SK-N-SH (cell line): ENCODE measurements at regions of chr3 and their contacts with region 1.

Region 1: DNA sequence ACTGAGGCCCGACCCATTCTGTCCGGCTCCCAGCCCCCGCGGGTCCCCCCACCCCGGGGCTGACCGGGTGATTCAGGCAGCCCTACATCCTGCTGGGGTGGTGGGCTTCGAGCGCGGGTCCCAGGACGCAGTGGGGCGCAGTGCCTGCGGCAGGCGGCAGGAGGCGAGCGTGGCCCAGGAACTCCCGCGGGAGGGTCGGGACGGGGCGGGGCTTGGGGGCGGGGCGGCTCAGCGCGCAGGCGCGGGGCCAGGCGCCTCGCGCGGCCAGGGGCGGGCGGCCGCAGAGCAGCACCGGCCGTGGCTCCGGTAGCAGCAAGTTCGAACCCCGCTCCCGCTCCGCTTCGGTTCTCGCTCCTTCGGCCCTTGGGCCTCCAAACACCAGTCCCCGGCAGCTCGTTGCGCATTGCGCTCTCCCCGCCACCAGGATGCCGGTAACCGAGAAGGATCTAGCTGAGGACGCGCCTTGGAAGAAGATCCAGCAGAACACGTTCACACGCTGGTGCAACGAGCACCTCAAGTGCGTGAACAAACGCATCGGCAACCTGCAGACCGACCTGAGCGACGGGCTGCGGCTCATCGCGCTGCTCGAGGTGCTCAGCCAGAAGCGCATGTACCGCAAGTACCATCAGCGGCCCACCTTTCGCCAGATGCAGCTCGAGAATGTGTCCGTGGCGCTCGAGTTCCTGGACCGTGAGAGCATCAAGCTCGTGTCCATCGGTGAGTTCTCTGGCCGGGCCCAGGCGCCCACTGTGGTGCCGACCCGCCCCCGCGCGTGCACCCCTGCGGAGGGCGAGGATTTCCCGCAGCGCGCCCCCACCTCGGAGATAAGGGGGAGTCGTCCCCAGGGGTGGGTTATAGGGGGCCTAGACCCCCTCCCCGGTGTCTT is at the start of gene FLNB:
- DNase-seq: peak; percentile 99
- H3K4me3 ChIP-seq: peak within 1 kb of the TSS; percentile 86 to 100
- H3K27ac ChIP-seq: peak within 1 kb of the TSS; percentile 62 to 85
- H3K4me1 ChIP-seq: peaks cover 10 to 33% of the 10 kb centered on the region in 2 experiments; a peak in 3 of 4 replicates
- H3K27me3 ChIP-seq: no peaks in the 10 kb centered on the region
- CTCF ChIP-seq: peak; percentile 68
- EP300 ChIP-seq: no peak
- RAD21 ChIP-seq: peak; percentile 76
- polyA plus RNA-seq, gene FLNB: 115 and 127 TPM in 2 replicates

Region 2: DNA sequence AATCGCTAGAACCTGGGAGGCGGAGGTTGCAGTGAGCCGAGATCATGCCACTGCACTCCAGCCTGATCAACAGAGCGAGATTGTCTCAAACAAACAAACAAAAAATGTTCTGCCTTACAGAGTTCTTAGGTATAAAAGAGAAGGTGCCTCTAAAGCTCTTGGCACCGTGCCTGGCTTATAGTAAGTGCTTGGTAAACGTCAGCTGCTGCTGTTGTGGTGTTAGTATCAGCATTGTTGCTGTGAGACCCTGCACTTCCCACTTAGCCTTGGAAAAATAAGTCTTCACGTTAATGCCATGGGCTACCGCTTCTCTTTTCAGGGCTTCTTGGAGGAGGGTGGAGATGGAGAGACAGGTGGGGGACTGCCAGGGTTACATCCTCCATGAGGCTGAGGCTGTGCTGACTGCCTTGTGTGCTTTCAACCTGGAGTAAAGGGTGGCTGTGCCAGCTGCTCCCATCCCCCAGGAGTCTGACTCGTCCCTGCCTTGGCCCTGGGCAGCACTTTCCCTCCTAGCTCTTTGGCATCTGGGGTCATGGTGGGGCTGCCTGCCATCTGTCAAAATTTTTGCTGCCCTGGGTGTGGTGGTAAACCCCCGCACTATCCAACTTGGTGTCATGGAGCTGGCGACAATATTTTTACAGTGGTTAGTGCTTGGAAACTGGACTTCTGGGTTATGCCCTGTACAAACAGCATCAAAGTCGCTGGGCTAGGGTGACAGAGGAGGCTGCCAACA is 17.6 kb after region 1 on chr3:
- CTCF ChIA-PET with region 1: interaction called, 17 read pairs
- POLR2A ChIA-PET with region 1: no interaction called
- DNase-seq: peak; percentile 49
- H3K4me3 ChIP-seq: no peak overlapping the region
- H3K27ac ChIP-seq: peak overlapping the region; percentile 29 to 35; a peak in 2 of 4 replicates
- H3K4me1 ChIP-seq: peaks cover 17 to 27% of the 10 kb centered on the region in 2 experiments; a peak in 2 of 4 replicates
- H3K27me3 ChIP-seq: no peaks in the 10 kb centered on the region
- CTCF ChIP-seq: no peak
- EP300 ChIP-seq: no peak
- RAD21 ChIP-seq: no peak

Region 3: GRCh38 chr3:58167431-58168351 is 159.3 kb after region 1 on chr3:
- CTCF ChIA-PET with region 1: interaction called, 37 read pairs
- POLR2A ChIA-PET with region 1: interaction called, 4 read pairs
- DNase-seq: peak; percentile 79
- H3K4me3 ChIP-seq: peak overlapping the region in 1 of 2 experiments; percentile 44; a peak in 1 of 4 replicates
- H3K27ac ChIP-seq: no peak overlapping the region
- H3K4me1 ChIP-seq: peaks cover 0 to 25% of the 10 kb centered on the region in 2 experiments; a peak in 2 of 4 replicates
- H3K27me3 ChIP-seq: no peaks in the 10 kb centered on the region
- CTCF ChIP-seq: peak; percentile 91
- EP300 ChIP-seq: no peak
- RAD21 ChIP-seq: peak; percentile 21